Mammary epithelial cell (primary cell): ENCODE measurements at regions of chr1 and their contacts with region 1.

Region 1: DNA sequence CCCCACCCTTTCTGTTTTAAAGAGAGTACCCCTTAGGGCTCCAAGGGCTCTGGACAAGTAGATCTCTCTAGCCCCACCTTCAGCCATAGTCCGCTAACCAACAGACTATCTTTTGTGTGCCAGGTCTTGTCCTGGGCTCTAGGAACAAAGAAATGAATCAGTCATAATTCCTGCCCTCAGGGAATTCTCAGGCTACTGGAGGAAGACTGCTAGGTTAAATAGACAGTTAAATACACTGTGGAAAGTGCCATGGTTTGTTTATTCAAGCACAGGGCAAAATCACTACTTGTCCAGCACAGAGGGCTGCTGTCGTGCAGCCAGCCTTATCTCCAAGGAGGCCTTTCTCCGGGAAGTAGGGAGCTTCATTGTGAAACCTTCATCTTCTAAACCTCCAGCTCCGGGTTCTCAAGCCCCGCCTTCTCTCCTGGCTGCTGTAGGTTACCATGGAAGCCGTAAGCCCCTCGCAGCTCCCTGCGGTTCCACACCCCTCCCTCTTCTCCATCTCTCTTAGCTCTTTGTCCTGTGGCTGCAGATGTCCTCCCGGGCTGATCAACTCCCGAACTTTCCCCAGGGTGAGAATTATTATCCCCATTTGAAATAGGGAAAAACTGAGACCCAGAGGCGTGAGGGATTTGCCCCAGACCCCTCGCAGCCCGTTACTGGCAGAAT is 29.8 kb downstream of the SHISAL2A start:
- DNase-seq: peak; percentile 96
- H3K4me3 ChIP-seq: no peak overlapping the region
- H3K27ac ChIP-seq: peak overlapping the region; percentile 72
- H3K4me1 ChIP-seq: peaks cover 57% of the 10 kb centered on the region
- H3K27me3 ChIP-seq: no peaks in the 10 kb centered on the region
- CTCF ChIP-seq: peak in 1 of 2 donors; percentile 17

Region 2: GRCh38 chr1:52552505-52553361 is 110.0 kb before region 1 on chr1 and contains the start of gene TUT4:
- CTCF ChIA-PET with region 1: no interaction called
- dilution Hi-C with region 1: no loop called
- in situ Hi-C with region 1: loop called in 1 of 2 experiments (anchors 10 kb)
- intact Hi-C with region 1: loop called (anchors 2 kb)
- DNase-seq: peak; percentile 74
- H3K4me3 ChIP-seq: peak within 1 kb of the TSS; percentile 84 to 95 (median 89)
- H3K27ac ChIP-seq: peak within 1 kb of the TSS; percentile 95
- H3K4me1 ChIP-seq: peaks cover 24% of the 10 kb centered on the region
- H3K27me3 ChIP-seq: no peaks in the 10 kb centered on the region
- CTCF ChIP-seq: peak in 1 of 2 donors; percentile 9
- total RNA-seq, gene TUT4: 30.5 to 47.9 TPM

Region 3: DNA sequence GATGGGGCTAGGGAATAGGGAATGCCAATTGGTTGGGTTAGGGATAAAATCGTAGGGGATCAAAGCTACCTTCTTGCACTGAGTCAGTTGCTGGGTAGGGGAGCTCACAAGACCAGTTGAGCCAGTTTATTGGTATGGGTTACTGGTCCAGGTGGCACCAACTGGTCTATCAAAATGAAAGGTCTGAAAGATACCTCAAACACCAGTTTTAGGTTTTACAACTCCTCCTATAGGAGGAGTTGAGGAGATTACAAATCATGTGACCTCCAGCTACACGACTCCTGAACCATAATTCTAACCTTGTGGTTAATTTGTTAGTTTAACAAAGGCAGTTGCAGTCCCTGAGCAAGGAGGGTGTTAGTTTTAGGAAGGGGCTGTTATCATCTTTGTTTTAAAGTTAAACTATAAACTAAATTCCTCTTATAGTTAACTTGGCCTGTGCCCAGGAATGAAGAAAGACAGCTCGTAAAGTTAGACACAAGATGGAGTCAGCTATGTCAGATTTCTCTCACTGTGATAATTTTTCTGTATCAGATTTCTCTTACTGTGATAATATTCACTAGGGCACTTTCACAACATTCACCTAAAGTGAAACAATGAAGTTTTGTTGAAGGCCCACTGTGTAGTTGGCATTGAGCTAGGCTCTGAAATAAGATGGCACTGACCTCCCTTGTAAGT is 27.2 kb before region 1 on chr1:
- CTCF ChIA-PET with region 1: no interaction called
- dilution Hi-C with region 1: no loop called
- in situ Hi-C with region 1: no loop called
- intact Hi-C with region 1: loop called (anchors 2 kb)
- DNase-seq: no peak
- H3K4me3 ChIP-seq: no peak overlapping the region
- H3K27ac ChIP-seq: no peak overlapping the region
- H3K4me1 ChIP-seq: peaks cover 22% of the 10 kb centered on the region
- H3K27me3 ChIP-seq: peaks cover 8% of the 10 kb centered on the region
- CTCF ChIP-seq: no peak

Region 4: DNA sequence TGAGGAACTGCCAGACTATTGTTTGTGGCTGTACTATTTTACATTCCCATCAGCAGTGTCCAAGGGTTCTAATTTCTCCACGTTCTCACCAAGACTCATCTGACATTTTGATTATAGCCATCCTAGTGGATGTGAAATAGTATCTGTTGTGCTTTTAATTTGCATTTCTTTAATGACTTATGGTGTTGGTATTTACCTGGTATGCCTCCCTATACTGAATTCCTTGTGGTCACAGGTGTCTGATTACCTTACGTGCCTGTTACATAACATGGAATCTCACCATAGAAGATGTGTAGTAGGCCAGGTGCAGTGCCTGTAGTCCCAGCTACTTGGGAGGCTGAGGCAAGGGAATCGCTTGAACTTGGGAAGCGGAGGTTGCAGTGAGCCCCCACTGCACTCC is 193.2 kb after region 1 on chr1:
- CTCF ChIA-PET with region 1: no interaction called
- dilution Hi-C with region 1: no loop called
- in situ Hi-C with region 1: no loop called
- intact Hi-C with region 1: no loop called
- DNase-seq: peak; percentile 49
- H3K4me3 ChIP-seq: no peak overlapping the region
- H3K27ac ChIP-seq: no peak overlapping the region
- H3K4me1 ChIP-seq: no peaks in the 10 kb centered on the region
- H3K27me3 ChIP-seq: no peaks in the 10 kb centered on the region
- CTCF ChIP-seq: no peak